GM12878 (cell line): ENCODE measurements at regions of chr1 and their contacts with region 1.

Region 1: GRCh38 chr1:172398970-172399755 is 21.3 kb upstream of the C1orf105 start:
- DNase-seq: no peak
- ATAC-seq: peak; percentile 58
- H3K4me3 ChIP-seq: 0 out of 2 replicates have a peak overlapping the region, but pooled peaks have one; percentile 3
- H3K27ac ChIP-seq: peak overlapping the region; percentile 89
- H3K4me1 ChIP-seq: peaks cover 58% of the 10 kb centered on the region
- H3K27me3 ChIP-seq: no peaks in the 10 kb centered on the region
- CTCF ChIP-seq: peak; percentile 35 to 58 (median 54); a peak in 5 of 6 replicates
- EP300 ChIP-seq: no peak
- POLR2A ChIP-seq: no peak
- RAD21 ChIP-seq: peak; percentile 76

Region 2: DNA sequence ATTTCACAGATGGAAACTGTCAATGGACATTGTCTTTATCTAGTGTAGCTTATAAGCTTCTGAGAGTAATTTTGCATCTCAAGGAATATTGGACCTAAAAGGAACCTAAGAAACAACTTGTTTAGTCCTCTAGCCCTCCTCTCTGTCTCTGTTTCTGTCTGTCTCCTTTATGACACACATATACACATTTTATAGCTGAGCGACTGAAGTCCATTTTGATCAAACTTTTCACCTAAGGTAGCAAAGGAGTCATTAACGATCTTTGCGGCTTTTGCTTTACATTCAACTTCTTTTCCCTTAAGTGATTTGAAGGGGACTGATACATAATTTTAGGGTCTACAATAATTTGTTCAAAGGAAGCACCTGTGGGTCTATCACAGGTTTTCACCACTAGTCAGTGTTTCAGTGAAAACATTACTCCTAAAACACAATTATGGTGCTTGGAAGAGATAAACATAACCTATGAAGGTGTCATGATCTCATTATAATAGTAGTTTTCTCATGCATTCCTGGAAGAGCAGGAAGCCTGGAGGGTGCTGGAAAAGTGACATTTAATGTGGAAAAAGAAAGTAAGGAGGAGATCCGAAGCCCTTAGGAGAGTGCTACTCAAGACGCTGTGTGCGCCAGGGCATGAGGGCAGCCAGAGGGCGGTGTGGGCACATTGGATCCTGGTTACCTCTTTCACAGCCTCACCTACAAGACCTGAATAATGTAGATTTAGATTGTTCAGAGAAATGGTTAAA is 309.2 kb before region 1 on chr1:
- CTCF ChIA-PET with region 1: interaction called, 71 read pairs
- POLR2A ChIA-PET with region 1: no interaction called
- RAD21 ChIA-PET with region 1: interaction called, 60 read pairs
- SMC1A ChIA-PET with region 1: interaction called, 113 read pairs
- in situ Hi-C with region 1: loop called (anchors 5 kb)
- intact Hi-C with region 1: loop called (anchors 1 kb)
- DNase-seq: peak; percentile 50
- ATAC-seq: peak; percentile 100
- H3K4me3 ChIP-seq: no peak overlapping the region
- H3K27ac ChIP-seq: no peak overlapping the region
- H3K4me1 ChIP-seq: no peaks in the 10 kb centered on the region
- H3K27me3 ChIP-seq: no peaks in the 10 kb centered on the region
- CTCF ChIP-seq: peak; percentile 78 to 89 (median 79)
- EP300 ChIP-seq: no peak
- POLR2A ChIP-seq: no peak
- RAD21 ChIP-seq: peak; percentile 85

Region 3: GRCh38 chr1:172144445-172145061 is 254.6 kb before region 1 on chr1:
- CTCF ChIA-PET with region 1: interaction called, 6 read pairs
- POLR2A ChIA-PET with region 1: no interaction called
- RAD21 ChIA-PET with region 1: interaction called, 5 read pairs
- SMC1A ChIA-PET with region 1: interaction called, 11 read pairs
- in situ Hi-C with region 1: no loop called
- intact Hi-C with region 1: no loop called
- DNase-seq: no peak
- ATAC-seq: no peak
- H3K4me3 ChIP-seq: no peak overlapping the region
- H3K27ac ChIP-seq: no peak overlapping the region
- H3K4me1 ChIP-seq: no peaks in the 10 kb centered on the region
- H3K27me3 ChIP-seq: no peaks in the 10 kb centered on the region
- CTCF ChIP-seq: no peak
- EP300 ChIP-seq: no peak
- POLR2A ChIP-seq: no peak
- RAD21 ChIP-seq: no peak

Region 4: DNA sequence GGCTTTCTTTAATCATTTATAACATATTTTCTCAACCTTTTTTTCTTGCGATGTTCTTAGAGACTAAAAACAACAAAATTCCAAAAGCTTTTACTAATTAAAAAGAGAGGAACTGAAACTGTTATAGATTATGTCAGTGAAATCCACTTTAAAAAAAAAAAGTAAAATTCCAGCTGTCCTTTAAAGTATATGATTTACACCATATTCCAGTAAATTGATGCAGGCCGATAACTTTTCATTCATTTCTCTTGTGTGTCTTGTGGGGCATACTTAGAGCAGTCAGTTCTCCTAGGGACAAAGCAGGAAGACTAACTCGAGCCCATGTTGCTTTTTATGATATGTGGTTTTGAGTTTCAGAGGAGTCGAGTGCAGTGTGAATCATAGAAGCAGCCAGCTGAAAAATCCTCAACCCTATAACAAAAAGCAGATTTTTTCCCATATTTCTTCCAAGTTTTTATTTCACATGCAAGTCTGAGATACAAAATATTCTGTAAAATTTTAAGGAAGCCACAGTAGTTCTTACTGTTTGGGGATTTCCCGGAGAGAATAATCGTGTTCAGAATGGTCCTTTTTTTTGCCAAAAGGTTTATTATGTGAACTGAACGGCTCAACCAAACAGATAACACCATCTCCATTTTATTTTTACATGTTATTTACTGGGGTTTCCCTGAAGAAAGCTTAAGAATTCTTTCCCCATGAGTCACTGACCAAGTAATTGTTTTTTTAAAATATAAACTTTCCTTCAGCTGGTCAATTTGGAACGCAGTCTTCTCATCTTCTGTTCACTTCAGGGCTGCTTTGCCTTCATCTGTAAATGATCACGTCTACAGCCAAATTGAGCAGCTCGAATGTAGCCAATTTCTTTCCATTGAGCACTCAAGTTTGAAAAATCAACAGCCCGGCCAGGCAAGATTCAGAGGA is 55.7 kb before region 1 on chr1:
- CTCF ChIA-PET with region 1: interaction called, 153 read pairs
- POLR2A ChIA-PET with region 1: interaction called, 14 read pairs
- RAD21 ChIA-PET with region 1: interaction called, 364 read pairs
- SMC1A ChIA-PET with region 1: interaction called, 413 read pairs
- in situ Hi-C with region 1: loop called (anchors 5 kb)
- intact Hi-C with region 1: loop called (anchors 1 kb)
- DNase-seq: no peak
- ATAC-seq: peak; percentile 37
- H3K4me3 ChIP-seq: no peak overlapping the region
- H3K27ac ChIP-seq: peak overlapping the region; percentile 98
- H3K4me1 ChIP-seq: peaks cover 58% of the 10 kb centered on the region
- H3K27me3 ChIP-seq: no peaks in the 10 kb centered on the region
- CTCF ChIP-seq: no peak
- EP300 ChIP-seq: peak in 1 of 2 experiments; percentile 13; a peak in 1 of 4 replicates
- POLR2A ChIP-seq: no peak
- RAD21 ChIP-seq: no peak

Region 5: GRCh38 chr1:172357753-172358385 is 41.3 kb before region 1 on chr1:
- CTCF ChIA-PET with region 1: interaction called, 131 read pairs
- POLR2A ChIA-PET with region 1: interaction called, 73 read pairs
- RAD21 ChIA-PET with region 1: interaction called, 394 read pairs
- SMC1A ChIA-PET with region 1: interaction called, 458 read pairs
- in situ Hi-C with region 1: no loop called
- intact Hi-C with region 1: loop called (anchors 1 kb)
- DNase-seq: no peak
- ATAC-seq: peak; percentile 35
- H3K4me3 ChIP-seq: 0 out of 2 replicates have a peak overlapping the region, but pooled peaks have one; percentile 12
- H3K27ac ChIP-seq: peak overlapping the region; percentile 96
- H3K4me1 ChIP-seq: peaks cover 48% of the 10 kb centered on the region
- H3K27me3 ChIP-seq: no peaks in the 10 kb centered on the region
- CTCF ChIP-seq: no peak
- EP300 ChIP-seq: no peak
- POLR2A ChIP-seq: no peak
- RAD21 ChIP-seq: no peak

Region 6: DNA sequence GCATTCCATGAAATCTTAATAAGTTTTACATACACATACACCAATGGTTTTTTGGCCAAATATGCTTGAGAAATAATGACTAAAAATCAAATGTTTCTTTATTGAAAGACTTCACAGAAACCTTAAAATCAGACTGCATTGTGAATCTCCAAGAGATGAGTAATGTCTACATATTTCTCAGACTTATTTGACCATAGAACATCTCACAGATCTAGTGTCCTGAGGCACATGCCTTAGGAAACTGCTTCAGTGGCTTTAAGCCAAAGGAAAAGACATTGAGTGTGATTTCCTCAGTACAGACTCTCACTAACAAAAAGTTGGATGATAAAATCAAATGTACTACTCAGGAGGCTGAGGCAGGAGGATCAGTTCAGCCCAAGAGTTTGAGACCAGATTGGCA is 15.2 kb after region 1 on chr1:
- CTCF ChIA-PET with region 1: interaction called, 47 read pairs
- POLR2A ChIA-PET with region 1: no interaction called
- RAD21 ChIA-PET with region 1: interaction called, 4 read pairs
- SMC1A ChIA-PET with region 1: interaction called, 12 read pairs
- in situ Hi-C with region 1: no loop called
- intact Hi-C with region 1: no loop called
- DNase-seq: no peak
- ATAC-seq: no peak
- H3K4me3 ChIP-seq: no peak overlapping the region
- H3K27ac ChIP-seq: no peak overlapping the region
- H3K4me1 ChIP-seq: no peaks in the 10 kb centered on the region
- H3K27me3 ChIP-seq: no peaks in the 10 kb centered on the region
- CTCF ChIP-seq: no peak
- EP300 ChIP-seq: no peak
- POLR2A ChIP-seq: no peak
- RAD21 ChIP-seq: no peak

Region 7: DNA sequence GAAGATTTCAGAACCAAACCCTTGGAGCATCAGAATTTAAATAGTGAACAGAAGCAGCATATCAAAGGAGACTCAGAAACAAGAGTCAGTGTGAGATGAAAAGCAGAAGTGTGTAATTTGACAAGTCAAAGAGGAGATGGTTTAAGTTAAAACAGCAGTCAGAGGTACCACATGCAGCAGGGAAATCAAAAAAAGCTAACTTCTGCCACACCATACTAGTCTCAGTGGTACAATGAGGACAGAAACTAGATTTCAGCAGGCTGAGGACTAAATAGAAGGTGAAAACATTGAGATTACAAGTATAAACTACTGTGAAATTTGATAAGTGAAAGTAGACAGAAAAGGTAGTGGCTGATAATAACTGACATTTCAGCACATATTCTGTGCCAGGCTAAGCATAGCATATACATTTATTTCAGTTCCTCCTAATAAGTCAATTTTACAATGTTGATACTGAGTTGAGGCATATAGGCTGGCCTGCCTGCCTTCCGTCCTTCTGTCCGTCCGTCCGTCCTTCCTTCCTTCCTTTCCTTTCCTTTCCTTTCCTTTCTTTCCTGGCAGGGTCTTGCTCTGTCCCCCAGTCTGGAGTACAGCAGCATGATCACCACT is 146.3 kb after region 1 on chr1:
- CTCF ChIA-PET with region 1: no interaction called
- POLR2A ChIA-PET with region 1: no interaction called
- RAD21 ChIA-PET with region 1: no interaction called
- SMC1A ChIA-PET with region 1: no interaction called
- in situ Hi-C with region 1: no loop called
- intact Hi-C with region 1: no loop called
- DNase-seq: peak; percentile 32
- ATAC-seq: peak; percentile 87
- H3K4me3 ChIP-seq: no peak overlapping the region
- H3K27ac ChIP-seq: peak overlapping the region; percentile 42
- H3K4me1 ChIP-seq: peaks cover 20% of the 10 kb centered on the region
- H3K27me3 ChIP-seq: no peaks in the 10 kb centered on the region
- CTCF ChIP-seq: no peak
- EP300 ChIP-seq: no peak
- POLR2A ChIP-seq: no peak
- RAD21 ChIP-seq: no peak

Region 8: GRCh38 chr1:172613294-172613693 is 214.1 kb after region 1 on chr1:
- CTCF ChIA-PET with region 1: no interaction called
- POLR2A ChIA-PET with region 1: no interaction called
- RAD21 ChIA-PET with region 1: no interaction called
- SMC1A ChIA-PET with region 1: no interaction called
- in situ Hi-C with region 1: no loop called
- intact Hi-C with region 1: no loop called
- DNase-seq: no peak
- ATAC-seq: no peak
- H3K4me3 ChIP-seq: no peak overlapping the region
- H3K27ac ChIP-seq: no peak overlapping the region
- H3K4me1 ChIP-seq: no peaks in the 10 kb centered on the region
- H3K27me3 ChIP-seq: no peaks in the 10 kb centered on the region; a peak in 1 of 4 replicates
- CTCF ChIP-seq: no peak
- EP300 ChIP-seq: no peak
- POLR2A ChIP-seq: no peak
- RAD21 ChIP-seq: no peak